Lower lobe of right lung (tissue), 2 donors: ENCODE measurements at regions of chr14 and their contacts with region 1.

Region 1: GRCh38 chr14:94001501-94002396 is 4.6 kb downstream of the CCDC197 start:
- DNase-seq: peak; percentile 59
- ATAC-seq: peak; percentile 88 to 91
- H3K4me3 ChIP-seq: no peak overlapping the region
- H3K27ac ChIP-seq: no peak overlapping the region
- H3K4me1 ChIP-seq: no peaks in the 10 kb centered on the region
- H3K27me3 ChIP-seq: peaks cover 19% of the 10 kb centered on the region
- CTCF ChIP-seq: peak; percentile 97

Region 2: GRCh38 chr14:93834699-93835371 is 166.9 kb before region 1 on chr14:
- intact Hi-C with region 1: no loop called
- DNase-seq: no peak
- ATAC-seq: no peak
- H3K4me3 ChIP-seq: no peak overlapping the region
- H3K27ac ChIP-seq: no peak overlapping the region
- H3K4me1 ChIP-seq: no peaks in the 10 kb centered on the region
- H3K27me3 ChIP-seq: peaks cover 10% of the 10 kb centered on the region
- CTCF ChIP-seq: no peak

Region 3: GRCh38 chr14:93939304-93940229 is 62.2 kb before region 1 on chr14:
- intact Hi-C with region 1: loop called (anchors 5 kb)
- DNase-seq: peak; percentile 88
- ATAC-seq: peak; percentile 89 to 94
- H3K4me3 ChIP-seq: peak overlapping the region; percentile 47
- H3K27ac ChIP-seq: no peak overlapping the region
- H3K4me1 ChIP-seq: peaks cover 9% of the 10 kb centered on the region
- H3K27me3 ChIP-seq: peaks cover 32% of the 10 kb centered on the region
- CTCF ChIP-seq: peak; percentile 91